ENCODE measurements at regions of chr10 and their contacts with region 1.

Region 1: GRCh38 chr10:29658984-29659965 is 24.5 kb upstream of the SVIL start:
- DNase-seq: peak; percentile 78
- ATAC-seq: peak; percentile 96
- H3K4me3 Mint-ChIP-seq: peak overlapping the region; percentile 22
- H3K27ac Mint-ChIP-seq: peak overlapping the region; percentile 5
- H3K4me1 Mint-ChIP-seq: peaks cover 34% of the 10 kb centered on the region
- H3K27me3 Mint-ChIP-seq: peaks cover 3% of the 10 kb centered on the region
- CTCF ChIP-seq: no peak

Region 2: DNA sequence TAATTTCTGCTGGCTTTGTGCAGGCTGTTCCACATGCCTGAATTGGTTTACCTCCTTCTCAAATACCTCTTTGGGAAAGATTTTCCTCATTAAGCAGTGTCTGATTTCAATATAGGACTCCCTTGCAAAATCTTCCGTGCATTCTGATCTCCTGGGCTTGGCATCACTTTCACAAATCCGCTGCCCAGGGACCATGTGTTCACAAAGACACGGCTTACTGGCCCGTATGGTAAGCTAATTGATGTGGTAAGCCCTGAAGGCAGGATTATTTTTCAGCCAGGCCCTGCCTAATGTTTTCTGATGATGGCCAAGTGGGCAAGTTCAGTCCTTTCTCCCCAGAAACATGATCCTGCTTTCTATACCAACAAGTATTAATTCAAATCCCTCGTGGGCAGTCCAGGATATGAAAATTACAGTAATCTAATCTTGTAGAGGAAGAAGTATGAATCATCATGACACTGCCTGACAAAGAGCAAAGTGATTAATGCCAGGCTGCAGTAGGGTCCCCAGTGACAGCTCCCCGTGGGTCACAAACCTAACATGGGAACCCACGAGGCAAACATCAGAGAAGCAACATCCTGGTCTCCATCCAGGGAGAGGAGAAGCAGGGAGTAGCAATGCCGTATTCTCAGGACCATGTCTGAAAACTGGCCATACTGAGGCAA is 12.9 kb before region 1 on chr10:
- CTCF ChIA-PET with region 1: interaction called, 16 read pairs
- POLR2A ChIA-PET with region 1: interaction called, 3 read pairs
- intact Hi-C with region 1: no loop called
- DNase-seq: peak; percentile 44
- ATAC-seq: peak; percentile 78
- H3K4me3 Mint-ChIP-seq: peak overlapping the region; percentile 36
- H3K27ac Mint-ChIP-seq: peak overlapping the region; percentile 57
- H3K4me1 Mint-ChIP-seq: peaks cover 37% of the 10 kb centered on the region
- H3K27me3 Mint-ChIP-seq: peaks cover 2% of the 10 kb centered on the region
- CTCF ChIP-seq: no peak

Region 3: GRCh38 chr10:29780096-29780495 is 120.8 kb after region 1 on chr10:
- CTCF ChIA-PET with region 1: no interaction called
- POLR2A ChIA-PET with region 1: no interaction called
- intact Hi-C with region 1: no loop called
- DNase-seq: no peak
- ATAC-seq: no peak
- H3K4me3 Mint-ChIP-seq: no peak overlapping the region
- H3K27ac Mint-ChIP-seq: no peak overlapping the region
- H3K4me1 Mint-ChIP-seq: no peaks in the 10 kb centered on the region
- H3K27me3 Mint-ChIP-seq: peaks cover 7% of the 10 kb centered on the region
- CTCF ChIP-seq: no peak

Measured in activated CD8-positive, alpha-beta T cell treated with anti-CD3 and anti-CD28 coated beads for 36 hours (primary cell).